ENCODE measurements at regions of chr10 and their contacts with region 1.

Region 1: GRCh38 chr10:95430231-95430951 is 130.8 kb downstream of the SORBS1 start:
- DNase-seq: peak in 1 of 3 donors; percentile 66
- ATAC-seq: peak; percentile 79 to 91 (median 88)
- H3K4me3 ChIP-seq: no peak overlapping the region
- H3K27ac ChIP-seq: peak overlapping the region; percentile 23 to 81 (median 37)
- H3K4me1 ChIP-seq: peaks cover 0 to 33% (median 6%) of the 10 kb centered on the region in 4 donors
- H3K27me3 ChIP-seq: no peaks in the 10 kb centered on the region
- CTCF ChIP-seq: peak; percentile 93 to 98 (median 97)
- POLR2A ChIP-seq: no peak

Region 2: GRCh38 chr10:95561182-95562075 is 131.0 kb after region 1 on chr10 and contains the start of gene SORBS1:
- intact Hi-C with region 1: loop called in 1 of 2 experiments (anchors 10 kb)
- DNase-seq: peak; percentile 96 to 98 (median 98)
- ATAC-seq: peak; percentile 93 to 98 (median 96)
- H3K4me3 ChIP-seq: peak within 1 kb of the TSS; percentile 69 to 91 (median 69)
- H3K27ac ChIP-seq: peak within 1 kb of the TSS; percentile 95 to 97 (median 96)
- H3K4me1 ChIP-seq: peaks cover 0 to 21% (median 9%) of the 10 kb centered on the region in 4 donors
- H3K27me3 ChIP-seq: no peaks in the 10 kb centered on the region
- CTCF ChIP-seq: no peak
- POLR2A ChIP-seq: peak; percentile 99
- total RNA-seq, gene SORBS1: 56.4 to 97.9 (median 76.5) TPM

Region 3: GRCh38 chr10:95601116-95601719 is 170.8 kb after region 1 on chr10:
- intact Hi-C with region 1: loop called (anchors 5 kb)
- DNase-seq: peak; percentile 66 to 82 (median 75)
- ATAC-seq: peak; percentile 99
- H3K4me3 ChIP-seq: no peak overlapping the region
- H3K27ac ChIP-seq: no peak overlapping the region
- H3K4me1 ChIP-seq: no peaks in the 10 kb centered on the region
- H3K27me3 ChIP-seq: no peaks in the 10 kb centered on the region
- CTCF ChIP-seq: peak; percentile 93 to 96 (median 94)
- POLR2A ChIP-seq: no peak